Breast epithelium (tissue), 4 donors: ENCODE measurements at regions of chr20 and their contacts with region 1.

Region 1: GRCh38 chr20:13325033-13325432 is 104.0 kb downstream of the ISM1 start:
- DNase-seq: no peak
- H3K4me3 ChIP-seq: no peak overlapping the region
- H3K27ac ChIP-seq: no peak overlapping the region
- H3K4me1 ChIP-seq: no peaks in the 10 kb centered on the region
- H3K27me3 ChIP-seq: no peaks in the 10 kb centered on the region
- CTCF ChIP-seq: peak in 2 of 3 donors; percentile 11 to 20
- POLR2A ChIP-seq: no peak

Region 2: GRCh38 chr20:13302647-13303450 is 22.2 kb before region 1 on chr20:
- intact Hi-C with region 1: no loop called
- DNase-seq: no peak
- H3K4me3 ChIP-seq: no peak overlapping the region
- H3K27ac ChIP-seq: no peak overlapping the region
- H3K4me1 ChIP-seq: no peaks in the 10 kb centered on the region
- H3K27me3 ChIP-seq: no peaks in the 10 kb centered on the region
- CTCF ChIP-seq: peak in 2 of 3 donors; percentile 33 to 39
- POLR2A ChIP-seq: no peak

Region 3: GRCh38 chr20:13384132-13384531 is 59.1 kb after region 1 on chr20:
- intact Hi-C with region 1: no loop called
- DNase-seq: no peak
- H3K4me3 ChIP-seq: no peak overlapping the region
- H3K27ac ChIP-seq: no peak overlapping the region
- H3K4me1 ChIP-seq: no peaks in the 10 kb centered on the region
- H3K27me3 ChIP-seq: no peaks in the 10 kb centered on the region
- CTCF ChIP-seq: no peak
- POLR2A ChIP-seq: no peak

Region 4: DNA sequence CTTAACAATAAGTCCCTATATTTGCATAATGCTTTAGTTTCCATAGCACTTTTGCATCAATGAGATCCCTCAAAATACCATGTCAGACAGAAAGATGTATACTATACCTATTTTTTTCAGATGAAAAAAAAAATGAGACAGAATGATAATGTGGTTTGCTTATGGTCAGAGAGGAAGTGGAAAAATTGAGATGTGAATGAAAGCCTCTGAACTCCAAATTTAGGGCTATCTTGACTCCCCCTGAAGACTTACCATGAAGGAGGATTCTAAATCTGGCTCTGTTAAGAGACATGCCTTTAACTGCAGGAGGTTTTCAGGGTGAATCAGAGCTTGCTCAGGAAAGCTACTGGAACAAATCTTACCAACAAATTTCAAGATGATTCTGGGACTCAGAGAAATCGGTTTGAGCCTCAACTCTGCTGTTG is 72.3 kb after region 1 on chr20:
- intact Hi-C with region 1: loop called (anchors 2 kb)
- DNase-seq: no peak
- H3K4me3 ChIP-seq: no peak overlapping the region
- H3K27ac ChIP-seq: no peak overlapping the region
- H3K4me1 ChIP-seq: no peaks in the 10 kb centered on the region
- H3K27me3 ChIP-seq: no peaks in the 10 kb centered on the region
- CTCF ChIP-seq: no peak
- POLR2A ChIP-seq: no peak